ENCODE measurements at regions of chr1 and their contacts with region 1.

Region 1: DNA sequence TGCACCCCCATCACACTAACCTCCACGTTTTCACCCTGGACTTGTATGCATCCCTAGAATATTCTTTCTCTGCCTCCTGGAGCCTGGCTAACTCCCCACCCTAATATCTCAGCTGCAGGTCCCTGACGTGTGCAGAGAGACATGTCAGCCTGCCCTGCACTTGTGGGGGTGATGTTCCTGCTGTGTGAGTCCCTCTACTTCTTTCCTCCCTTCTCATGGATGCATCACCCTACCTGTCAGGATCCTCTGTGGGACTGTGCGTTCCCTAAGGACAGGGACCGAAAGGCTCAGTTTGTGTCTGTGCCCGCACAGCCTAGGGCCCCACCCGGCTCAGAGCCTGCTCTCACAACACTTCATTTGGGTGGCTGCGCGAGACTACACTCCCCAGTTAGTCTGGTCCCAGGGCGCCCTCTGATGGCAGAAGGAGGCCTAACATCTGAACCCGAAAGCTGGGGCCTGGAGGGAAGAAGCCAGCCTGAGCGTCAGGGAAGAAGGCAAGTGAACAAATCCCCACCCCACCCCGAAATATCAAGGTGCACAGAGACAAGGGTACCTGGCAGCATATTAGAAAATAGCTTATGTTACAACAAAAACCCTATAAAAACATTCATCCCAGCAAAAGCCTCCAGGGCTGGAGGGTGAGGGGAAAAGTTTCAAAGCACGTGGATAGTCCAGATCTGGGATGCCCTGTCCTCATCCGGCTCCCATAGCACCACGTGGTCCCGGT is 3.7 kb downstream of the CD52 start:
- DNase-seq: peak; percentile 99
- H3K4me3 Mint-ChIP-seq: peak overlapping the region; percentile 82
- H3K27ac Mint-ChIP-seq: peak overlapping the region; percentile 96
- H3K4me1 Mint-ChIP-seq: peaks cover 40% of the 10 kb centered on the region
- H3K27me3 Mint-ChIP-seq: no peaks in the 10 kb centered on the region

Region 2: DNA sequence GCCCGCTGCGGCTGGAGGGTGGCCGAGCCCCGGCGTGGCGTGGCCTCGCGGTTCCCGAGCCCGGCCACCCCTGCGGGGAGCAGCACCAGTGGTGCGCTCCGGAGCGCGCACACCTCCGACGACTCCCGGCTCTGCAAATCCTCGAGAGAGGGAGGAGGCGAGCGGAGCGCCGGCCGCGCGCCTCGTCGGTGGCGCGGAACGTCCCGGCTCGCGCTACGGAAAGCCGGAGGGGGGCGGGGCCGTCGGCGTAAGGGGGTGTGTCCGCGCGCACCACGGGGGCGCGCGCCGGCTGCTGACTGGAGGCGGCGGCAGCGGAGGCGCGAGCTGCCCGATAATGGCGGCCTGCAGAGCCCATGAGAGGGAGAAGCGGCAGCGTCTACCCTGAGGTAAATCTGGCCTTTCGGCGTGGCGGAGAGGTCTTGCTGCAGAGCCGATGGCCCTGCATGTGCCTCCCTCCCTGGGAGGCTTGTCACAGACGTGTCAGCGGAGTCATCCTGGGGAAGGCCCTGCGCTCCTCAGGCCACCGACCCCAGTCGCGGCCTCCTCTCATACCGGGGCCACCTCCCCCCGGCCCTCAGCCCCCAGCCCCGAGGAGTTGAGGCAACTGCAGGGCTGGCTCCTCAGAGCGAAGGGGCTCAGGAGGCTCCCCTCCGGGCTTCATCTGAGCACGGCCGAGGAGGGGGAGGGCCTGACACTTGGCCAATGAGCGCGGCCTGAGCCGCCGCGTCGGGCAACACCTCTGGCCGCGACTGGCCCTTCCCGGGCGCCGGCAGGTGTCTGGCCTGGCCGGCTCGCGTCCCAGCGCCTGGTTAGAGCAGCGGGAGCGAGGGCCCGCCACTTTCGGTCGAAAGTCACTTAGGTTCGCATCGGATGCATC is 209.7 kb before region 1 on chr1 and contains the start of gene PDIK1L:
- intact Hi-C with region 1: loop called (anchors 1 kb)
- DNase-seq: peak; percentile 98
- H3K4me3 Mint-ChIP-seq: peak within 1 kb of the TSS; percentile 90
- H3K27ac Mint-ChIP-seq: peak within 1 kb of the TSS; percentile 95
- H3K4me1 Mint-ChIP-seq: peaks cover 28% of the 10 kb centered on the region
- H3K27me3 Mint-ChIP-seq: no peaks in the 10 kb centered on the region
- total RNA-seq, gene PDIK1L: 15.8 and 18.7 TPM in 2 replicates

Region 3: GRCh38 chr1:26233903-26234643 is 87.4 kb before region 1 on chr1 and contains the start of gene CEP85:
- intact Hi-C with region 1: loop called (anchors 1 kb)
- DNase-seq: peak; percentile 99
- H3K4me3 Mint-ChIP-seq: peak within 1 kb of the TSS; percentile 96
- H3K27ac Mint-ChIP-seq: peak within 1 kb of the TSS; percentile 91
- H3K4me1 Mint-ChIP-seq: peaks cover 31% of the 10 kb centered on the region
- H3K27me3 Mint-ChIP-seq: peaks cover 6% of the 10 kb centered on the region
- total RNA-seq, gene CEP85: 39.3 and 40.8 TPM in 2 replicates

Region 4: DNA sequence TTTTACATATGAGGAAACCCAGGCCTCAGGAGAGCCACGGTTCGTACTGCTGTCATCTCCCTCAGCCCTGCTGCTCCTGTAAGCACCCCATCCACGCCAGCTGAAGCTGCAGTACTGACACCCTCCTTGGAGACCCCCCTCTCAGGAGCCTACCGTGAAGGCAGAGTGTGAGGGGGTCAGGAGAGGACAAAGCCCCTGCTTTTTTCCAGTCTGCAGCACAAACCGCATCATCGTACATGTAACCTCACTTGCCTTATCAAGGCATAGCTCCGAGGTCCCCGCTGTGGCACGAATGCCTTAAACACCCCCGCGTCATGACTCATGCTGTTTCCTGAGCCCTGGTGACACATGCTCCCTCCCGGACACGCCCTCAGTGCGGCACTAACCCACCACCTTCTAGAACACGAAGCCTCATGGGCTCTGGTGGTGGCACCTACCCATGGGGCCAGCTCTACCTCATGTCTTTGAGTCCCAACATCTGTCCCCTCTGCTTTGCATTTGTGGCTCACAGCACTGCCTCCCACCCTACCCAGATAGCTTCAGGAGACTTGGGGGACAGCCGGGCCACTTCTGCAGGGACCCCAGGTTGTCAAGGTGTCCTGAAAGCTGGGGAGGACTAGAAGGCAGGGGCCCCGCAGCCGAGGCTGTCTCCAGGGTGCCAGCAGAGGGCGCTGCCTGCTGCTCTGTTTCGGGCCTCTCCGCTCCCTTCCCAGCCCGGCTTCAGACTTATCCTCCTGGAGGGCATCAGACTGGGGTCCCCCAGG is 36.7 kb before region 1 on chr1:
- intact Hi-C with region 1: loop called (anchors 1 kb)
- DNase-seq: peak; percentile 96
- H3K4me3 Mint-ChIP-seq: peak overlapping the region; percentile 88
- H3K27ac Mint-ChIP-seq: peak overlapping the region; percentile 98
- H3K4me1 Mint-ChIP-seq: peaks cover 82% of the 10 kb centered on the region
- H3K27me3 Mint-ChIP-seq: no peaks in the 10 kb centered on the region

Region 5: GRCh38 chr1:26296340-26297056 is 25.0 kb before region 1 on chr1:
- intact Hi-C with region 1: no loop called
- DNase-seq: no peak
- H3K4me3 Mint-ChIP-seq: no peak overlapping the region
- H3K27ac Mint-ChIP-seq: peak overlapping the region; percentile 66
- H3K4me1 Mint-ChIP-seq: peaks cover 10% of the 10 kb centered on the region
- H3K27me3 Mint-ChIP-seq: no peaks in the 10 kb centered on the region

Region 6: GRCh38 chr1:26363549-26364448 is 42.3 kb after region 1 on chr1:
- intact Hi-C with region 1: loop called (anchors 5 kb)
- DNase-seq: peak; percentile 96
- H3K4me3 Mint-ChIP-seq: no peak overlapping the region
- H3K27ac Mint-ChIP-seq: peak overlapping the region; percentile 11
- H3K4me1 Mint-ChIP-seq: peaks cover 39% of the 10 kb centered on the region
- H3K27me3 Mint-ChIP-seq: peaks cover 18% of the 10 kb centered on the region

Region 7: GRCh38 chr1:26472901-26473845 is 151.7 kb after region 1 on chr1:
- intact Hi-C with region 1: loop called (anchors 5 kb)
- DNase-seq: peak; percentile 99
- H3K4me3 Mint-ChIP-seq: peak overlapping the region; percentile 94
- H3K27ac Mint-ChIP-seq: peak overlapping the region; percentile 84
- H3K4me1 Mint-ChIP-seq: peaks cover 48% of the 10 kb centered on the region
- H3K27me3 Mint-ChIP-seq: peaks cover 2% of the 10 kb centered on the region